ENCODE measurements at regions of chr16 and their contacts with region 1.

Region 1: GRCh38 chr16:30922960-30923535 is 324 bp upstream of the FBXL19 start:
- DNase-seq: peak; percentile 98
- ATAC-seq: peak; percentile 76
- H3K4me3 Mint-ChIP-seq: peak overlapping the region; percentile 88
- H3K27ac Mint-ChIP-seq: peak overlapping the region; percentile 100
- H3K4me1 Mint-ChIP-seq: peaks cover 20% of the 10 kb centered on the region
- H3K27me3 Mint-ChIP-seq: no peaks in the 10 kb centered on the region

Region 2: DNA sequence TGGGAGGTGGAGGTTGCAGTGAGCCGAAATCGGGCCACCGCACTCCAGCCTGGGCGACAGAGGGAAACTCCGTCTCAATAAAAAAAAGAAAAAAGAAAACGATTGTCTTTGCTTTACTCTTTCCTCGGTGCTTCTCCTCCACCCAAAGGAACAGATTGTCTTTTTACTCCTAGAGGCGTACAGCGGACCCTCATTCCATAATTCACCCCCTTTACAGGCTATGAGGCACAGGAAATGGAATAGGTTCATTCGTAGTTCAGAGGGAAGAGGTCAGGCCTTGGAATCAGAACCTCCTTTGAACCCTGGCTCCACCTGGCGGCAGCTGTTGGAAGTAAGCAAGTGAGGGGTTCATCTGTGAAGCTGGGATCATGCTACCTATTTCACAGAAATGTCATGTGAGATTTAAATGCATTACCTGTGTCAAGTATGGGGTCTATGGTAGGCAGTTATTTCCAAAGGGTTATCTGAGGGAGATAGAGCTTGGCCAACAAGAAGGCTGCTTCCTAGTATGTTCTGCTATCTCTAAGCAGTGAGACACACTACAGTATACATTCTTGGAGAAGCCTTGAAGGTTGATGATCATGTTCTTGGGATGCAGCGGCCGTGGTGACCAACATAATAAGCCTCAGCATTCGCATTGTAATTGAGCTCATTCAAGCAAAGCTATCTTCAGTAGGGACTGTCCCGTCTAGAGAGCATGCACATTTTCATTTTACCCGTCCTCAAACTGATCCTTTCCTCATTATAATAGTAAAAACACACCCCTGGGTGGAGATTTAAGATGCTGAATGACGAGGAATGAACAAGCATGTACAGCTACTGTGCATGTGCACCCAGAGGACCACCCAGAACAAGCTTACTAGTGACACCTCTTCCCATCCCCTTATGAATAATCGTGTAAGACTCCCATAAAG is 294.2 kb before region 1 on chr16:
- CTCF ChIA-PET with region 1: no interaction called
- POLR2A ChIA-PET with region 1: no interaction called
- intact Hi-C with region 1: loop called in 1 of 2 experiments (anchors 1 kb)
- DNase-seq: peak; percentile 95
- ATAC-seq: peak; percentile 93
- H3K4me3 Mint-ChIP-seq: peak overlapping the region; percentile 58
- H3K27ac Mint-ChIP-seq: peak overlapping the region; percentile 82
- H3K4me1 Mint-ChIP-seq: peaks cover 14% of the 10 kb centered on the region
- H3K27me3 Mint-ChIP-seq: no peaks in the 10 kb centered on the region

Region 3: GRCh38 chr16:30775392-30776188 is 147.5 kb before region 1 on chr16:
- CTCF ChIA-PET with region 1: no interaction called
- POLR2A ChIA-PET with region 1: no interaction called
- intact Hi-C with region 1: loop called in 1 of 2 experiments (anchors 1 kb)
- DNase-seq: peak; percentile 80
- ATAC-seq: peak; percentile 85
- H3K4me3 Mint-ChIP-seq: peak overlapping the region; percentile 83
- H3K27ac Mint-ChIP-seq: peak overlapping the region; percentile 93
- H3K4me1 Mint-ChIP-seq: peaks cover 15% of the 10 kb centered on the region
- H3K27me3 Mint-ChIP-seq: no peaks in the 10 kb centered on the region

Region 4: GRCh38 chr16:30902029-30902972 is 20.7 kb before region 1 on chr16:
- CTCF ChIA-PET with region 1: interaction called, 12 read pairs
- POLR2A ChIA-PET with region 1: no interaction called
- intact Hi-C with region 1: loop called (anchors 1 kb)
- DNase-seq: peak; percentile 77
- ATAC-seq: peak; percentile 87
- H3K4me3 Mint-ChIP-seq: peak overlapping the region; percentile 80
- H3K27ac Mint-ChIP-seq: peak overlapping the region; percentile 99
- H3K4me1 Mint-ChIP-seq: peaks cover 25% of the 10 kb centered on the region
- H3K27me3 Mint-ChIP-seq: no peaks in the 10 kb centered on the region

Region 5: GRCh38 chr16:31073968-31074813 is 151.1 kb after region 1 on chr16 and contains the starts of genes ZNF646 and ZNF668:
- CTCF ChIA-PET with region 1: interaction called, 3 read pairs
- POLR2A ChIA-PET with region 1: no interaction called
- intact Hi-C with region 1: loop called in 1 of 2 experiments (anchors 1 kb)
- DNase-seq: peak; percentile 99
- ATAC-seq: peak; percentile 83
- H3K4me3 Mint-ChIP-seq: peak within 1 kb of the TSS; percentile 97
- H3K27ac Mint-ChIP-seq: peak within 1 kb of the TSS; percentile 98
- H3K4me1 Mint-ChIP-seq: peaks cover 30% of the 10 kb centered on the region
- H3K27me3 Mint-ChIP-seq: no peaks in the 10 kb centered on the region
- total RNA-seq, gene ZNF646: 21.3 to 25.8 TPM
- total RNA-seq, gene ZNF668: 9.2 to 9.9 TPM

Region 6: DNA sequence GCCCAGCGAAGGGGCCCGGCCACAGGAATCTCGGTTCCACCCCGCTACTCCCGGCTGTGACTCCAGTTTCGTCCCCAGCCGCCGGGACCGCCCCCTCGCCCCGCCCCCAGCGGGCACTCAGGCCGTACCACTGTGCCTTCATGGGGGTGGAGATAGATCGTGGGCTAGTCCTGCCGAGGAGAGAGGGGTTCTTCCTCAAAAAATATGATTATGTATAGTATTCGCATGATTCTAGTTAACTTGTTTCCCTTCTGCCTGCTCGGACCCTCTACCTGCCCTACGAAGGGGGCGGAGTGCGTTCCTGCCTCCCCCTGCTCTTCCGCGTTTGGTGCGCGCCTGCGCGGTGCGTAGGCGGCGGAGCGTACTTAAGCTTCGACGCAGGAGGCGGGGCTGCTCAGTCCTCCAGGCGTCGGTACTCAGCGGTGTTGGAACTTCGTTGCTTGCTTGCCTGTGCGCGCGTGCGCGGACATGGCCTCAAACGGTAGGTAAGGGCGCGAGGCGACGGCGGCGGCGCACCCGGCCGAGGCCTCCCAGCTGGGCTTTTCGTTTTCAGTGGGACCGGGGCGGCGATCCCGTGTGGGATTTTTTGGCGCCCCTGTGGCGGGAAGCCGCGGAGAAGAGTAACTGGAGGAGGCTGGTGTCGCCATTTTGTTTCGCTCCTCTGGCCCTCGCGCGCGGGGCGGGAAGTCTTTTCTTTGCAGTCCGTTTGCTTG is 256.9 kb after region 1 on chr16 and contains the start of gene FUS:
- CTCF ChIA-PET with region 1: no interaction called
- POLR2A ChIA-PET with region 1: no interaction called
- intact Hi-C with region 1: loop called in 1 of 2 experiments (anchors 1 kb)
- DNase-seq: peak; percentile 94
- ATAC-seq: peak; percentile 56
- H3K4me3 Mint-ChIP-seq: peak within 1 kb of the TSS; percentile 95
- H3K27ac Mint-ChIP-seq: peak within 1 kb of the TSS; percentile 99
- H3K4me1 Mint-ChIP-seq: peaks cover 51% of the 10 kb centered on the region
- H3K27me3 Mint-ChIP-seq: no peaks in the 10 kb centered on the region
- total RNA-seq, gene FUS: 647 to 648 TPM

Measured in activated CD4-positive, alpha-beta T cell treated with anti-CD3 and anti-CD28 coated beads for 36 hours (primary cell).